ENCODE measurements at regions of chr5 and their contacts with region 1.

Region 1: DNA sequence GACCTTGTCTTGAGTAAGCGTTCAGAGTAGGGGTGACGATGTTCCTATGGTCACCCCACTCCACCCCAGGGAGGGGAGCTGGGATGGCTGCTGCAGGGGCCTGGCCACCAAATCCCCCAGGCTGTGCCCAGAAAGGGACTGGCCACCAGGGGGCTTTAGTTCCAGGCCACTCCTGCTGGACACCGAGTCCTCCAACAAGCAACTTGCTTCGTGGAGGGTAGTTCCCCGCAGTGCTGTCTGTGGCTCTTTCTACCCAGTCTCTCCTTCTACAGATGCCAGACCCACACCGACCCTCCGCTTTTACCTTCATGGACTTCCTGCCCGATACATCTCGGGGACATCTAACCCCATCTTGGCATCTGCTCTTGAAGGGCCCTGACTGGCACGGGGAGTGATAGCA is 35.7 kb upstream of the GABRP start:
- DNase-seq: peak; percentile 72
- ATAC-seq: peak; percentile 24
- H3K4me3 Mint-ChIP-seq: no peak overlapping the region
- H3K27ac Mint-ChIP-seq: peak overlapping the region; percentile 99
- H3K4me1 Mint-ChIP-seq: peaks cover 73% of the 10 kb centered on the region
- H3K27me3 Mint-ChIP-seq: peaks cover 24% of the 10 kb centered on the region
- CTCF ChIP-seq: peak; percentile 60

Region 2: GRCh38 chr5:170267431-170268152 is 480.3 kb before region 1 on chr5:
- CTCF ChIA-PET with region 1: no interaction called
- POLR2A ChIA-PET with region 1: no interaction called
- DNase-seq: peak; percentile 84
- ATAC-seq: peak; percentile 88
- H3K4me3 Mint-ChIP-seq: no peak overlapping the region
- H3K27ac Mint-ChIP-seq: no peak overlapping the region
- H3K4me1 Mint-ChIP-seq: peaks cover 57% of the 10 kb centered on the region
- H3K27me3 Mint-ChIP-seq: peaks cover 4% of the 10 kb centered on the region; the same call in 1 of the 2 replicates
- CTCF ChIP-seq: peak; percentile 81

Region 3: GRCh38 chr5:170638454-170639220 is 109.2 kb before region 1 on chr5:
- CTCF ChIA-PET with region 1: interaction called, 32 read pairs
- POLR2A ChIA-PET with region 1: interaction called, 5 read pairs
- DNase-seq: peak; percentile 96
- ATAC-seq: peak; percentile 88
- H3K4me3 Mint-ChIP-seq: peak overlapping the region; percentile 2; the same call in 1 of the 2 replicates
- H3K27ac Mint-ChIP-seq: no peak overlapping the region
- H3K4me1 Mint-ChIP-seq: peaks cover 46% of the 10 kb centered on the region
- H3K27me3 Mint-ChIP-seq: peaks cover 5% of the 10 kb centered on the region
- CTCF ChIP-seq: peak; percentile 92

Region 4: GRCh38 chr5:170760113-170760512 is 12.3 kb after region 1 on chr5:
- CTCF ChIA-PET with region 1: interaction called, 19 read pairs
- POLR2A ChIA-PET with region 1: interaction called, 15 read pairs
- DNase-seq: no peak
- ATAC-seq: no peak
- H3K4me3 Mint-ChIP-seq: no peak overlapping the region
- H3K27ac Mint-ChIP-seq: no peak overlapping the region
- H3K4me1 Mint-ChIP-seq: peaks cover 32% of the 10 kb centered on the region
- H3K27me3 Mint-ChIP-seq: no peaks in the 10 kb centered on the region
- CTCF ChIP-seq: no peak

Region 5: GRCh38 chr5:170774836-170775235 is 27.0 kb after region 1 on chr5:
- CTCF ChIA-PET with region 1: interaction called, 62 read pairs
- POLR2A ChIA-PET with region 1: interaction called, 6 read pairs
- DNase-seq: no peak
- ATAC-seq: no peak
- H3K4me3 Mint-ChIP-seq: no peak overlapping the region
- H3K27ac Mint-ChIP-seq: no peak overlapping the region
- H3K4me1 Mint-ChIP-seq: peaks cover 41% of the 10 kb centered on the region
- H3K27me3 Mint-ChIP-seq: peaks cover 3% of the 10 kb centered on the region
- CTCF ChIP-seq: no peak

Region 6: DNA sequence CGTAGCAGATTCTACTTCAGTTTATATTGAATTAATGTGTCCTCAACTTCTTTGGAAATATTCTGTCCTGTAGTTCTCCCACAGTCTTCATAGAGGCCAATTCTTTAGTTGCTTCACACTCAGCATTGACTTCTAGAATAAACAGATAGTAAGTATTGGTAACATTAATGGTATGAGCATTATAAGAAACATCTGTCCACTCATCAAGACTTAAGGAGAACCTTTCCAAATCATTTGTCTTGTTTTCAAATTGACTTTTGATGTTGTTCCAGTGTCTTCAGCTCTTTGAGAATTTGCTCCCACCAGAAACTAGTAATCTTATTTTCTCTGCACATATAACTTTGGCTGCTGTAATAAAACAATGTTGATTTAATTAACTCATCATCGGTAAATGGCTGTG is 132.2 kb after region 1 on chr5:
- CTCF ChIA-PET with region 1: no interaction called
- POLR2A ChIA-PET with region 1: no interaction called
- DNase-seq: no peak
- ATAC-seq: no peak
- H3K4me3 Mint-ChIP-seq: no peak overlapping the region
- H3K27ac Mint-ChIP-seq: no peak overlapping the region
- H3K4me1 Mint-ChIP-seq: peaks cover 20% of the 10 kb centered on the region
- H3K27me3 Mint-ChIP-seq: no peaks in the 10 kb centered on the region
- CTCF ChIP-seq: no peak

Measured in WTC11 (cell line).